ENCODE measurements at regions of chr7 and their contacts with region 1.

Region 1: DNA sequence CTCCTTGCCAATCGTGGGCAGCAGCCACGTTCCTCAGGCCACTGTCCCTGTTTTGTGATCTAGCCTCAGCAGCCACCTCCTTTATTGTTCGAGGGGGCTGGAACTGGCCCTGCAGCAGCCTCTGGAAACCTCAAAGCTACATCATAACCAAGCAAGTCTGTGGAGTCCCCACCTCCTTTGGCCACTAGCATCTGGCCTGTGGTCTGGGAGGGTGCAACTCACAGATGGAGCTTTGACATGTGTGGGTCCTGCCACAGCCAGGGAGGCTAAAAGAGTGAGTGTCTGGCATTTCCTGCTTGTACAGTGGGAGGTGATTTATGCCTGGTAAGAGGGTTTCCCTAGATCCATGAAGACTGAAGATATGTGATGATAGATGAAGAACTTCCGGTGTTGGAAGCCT is 32.3 kb upstream of the NUB1 start:
- DNase-seq: no peak
- H3K4me3 ChIP-seq: no peak overlapping the region
- H3K27ac ChIP-seq: no peak overlapping the region
- H3K4me1 ChIP-seq: no peaks in the 10 kb centered on the region
- H3K27me3 ChIP-seq: no peaks in the 10 kb centered on the region
- CTCF ChIP-seq: no peak

Region 2: GRCh38 chr7:151143261-151144015 is 165.9 kb before region 1 on chr7:
- intact Hi-C with region 1: no loop called
- DNase-seq: peak in 2 of 5 donors; percentile 7 to 59
- H3K4me3 ChIP-seq: no peak overlapping the region
- H3K27ac ChIP-seq: no peak overlapping the region
- H3K4me1 ChIP-seq: no peaks in the 10 kb centered on the region
- H3K27me3 ChIP-seq: no peaks in the 10 kb centered on the region
- CTCF ChIP-seq: no peak

Region 3: GRCh38 chr7:151244196-151244840 is 65.0 kb before region 1 on chr7:
- intact Hi-C with region 1: loop called (anchors 10 kb)
- DNase-seq: peak; percentile 60 to 79 (median 66)
- H3K4me3 ChIP-seq: no peak overlapping the region
- H3K27ac ChIP-seq: no peak overlapping the region
- H3K4me1 ChIP-seq: peaks cover 0 to 37% (median 10%) of the 10 kb centered on the region in 3 donors
- H3K27me3 ChIP-seq: no peaks in the 10 kb centered on the region
- CTCF ChIP-seq: peak; percentile 59

Region 4: GRCh38 chr7:151426486-151426905 is 117.2 kb after region 1 on chr7:
- intact Hi-C with region 1: no loop called
- DNase-seq: peak in 3 of 5 donors; percentile 40 to 88 (median 64)
- H3K4me3 ChIP-seq: no peak overlapping the region
- H3K27ac ChIP-seq: peak overlapping the region in 1 of 2 donors; percentile 73
- H3K4me1 ChIP-seq: peaks cover 0 to 8% (median 8%) of the 10 kb centered on the region in 3 donors
- H3K27me3 ChIP-seq: no peaks in the 10 kb centered on the region
- CTCF ChIP-seq: no peak

Measured in kidney (tissue), 22 donors.